ENCODE measurements at regions of chr4 and their contacts with region 1.

Region 1: GRCh38 chr4:56937262-56937661 is 29.6 kb downstream of the REST start:
- DNase-seq: peak; percentile 93
- ATAC-seq: peak; percentile 94
- H3K4me3 ChIP-seq: no peak overlapping the region
- H3K27ac ChIP-seq: peak overlapping the region; percentile 28
- H3K4me1 ChIP-seq: peaks cover 2% of the 10 kb centered on the region; the same call in 1 of the 2 replicates
- H3K27me3 ChIP-seq: no peaks in the 10 kb centered on the region
- CTCF ChIP-seq: no peak
- POLR2A ChIP-seq: no peak
- RAD21 ChIP-seq: no peak

Region 2: GRCh38 chr4:55931833-55932232 is 1005.4 kb before region 1 on chr4:
- CTCF ChIA-PET with region 1: no interaction called
- POLR2A ChIA-PET with region 1: no interaction called
- dilution Hi-C with region 1: no loop called
- in situ Hi-C with region 1: no loop called
- intact Hi-C with region 1: no loop called
- DNase-seq: peak; percentile 80
- ATAC-seq: peak; percentile 86
- H3K4me3 ChIP-seq: no peak overlapping the region
- H3K27ac ChIP-seq: peak overlapping the region; percentile 78
- H3K4me1 ChIP-seq: peaks cover 8% of the 10 kb centered on the region
- H3K27me3 ChIP-seq: no peaks in the 10 kb centered on the region
- CTCF ChIP-seq: no peak
- POLR2A ChIP-seq: no peak
- RAD21 ChIP-seq: no peak

Region 3: GRCh38 chr4:56977321-56978012 is 40.2 kb after region 1 on chr4 and contains the start of gene NOA1:
- CTCF ChIA-PET with region 1: interaction called, 5 read pairs
- POLR2A ChIA-PET with region 1: no interaction called
- dilution Hi-C with region 1: no loop called
- in situ Hi-C with region 1: no loop called
- intact Hi-C with region 1: loop called (anchors 2 kb)
- DNase-seq: peak; percentile 99
- ATAC-seq: peak; percentile 71
- H3K4me3 ChIP-seq: peak within 1 kb of the TSS; percentile 86
- H3K27ac ChIP-seq: peak within 1 kb of the TSS; percentile 89
- H3K4me1 ChIP-seq: no peaks in the 10 kb centered on the region
- H3K27me3 ChIP-seq: no peaks in the 10 kb centered on the region
- CTCF ChIP-seq: no peak
- POLR2A ChIP-seq: peak; percentile 59; the same call in 1 of the 2 replicates
- RAD21 ChIP-seq: no peak
- total RNA-seq, gene NOA1: 9.7 and 10.4 TPM in 2 replicates

Region 4: DNA sequence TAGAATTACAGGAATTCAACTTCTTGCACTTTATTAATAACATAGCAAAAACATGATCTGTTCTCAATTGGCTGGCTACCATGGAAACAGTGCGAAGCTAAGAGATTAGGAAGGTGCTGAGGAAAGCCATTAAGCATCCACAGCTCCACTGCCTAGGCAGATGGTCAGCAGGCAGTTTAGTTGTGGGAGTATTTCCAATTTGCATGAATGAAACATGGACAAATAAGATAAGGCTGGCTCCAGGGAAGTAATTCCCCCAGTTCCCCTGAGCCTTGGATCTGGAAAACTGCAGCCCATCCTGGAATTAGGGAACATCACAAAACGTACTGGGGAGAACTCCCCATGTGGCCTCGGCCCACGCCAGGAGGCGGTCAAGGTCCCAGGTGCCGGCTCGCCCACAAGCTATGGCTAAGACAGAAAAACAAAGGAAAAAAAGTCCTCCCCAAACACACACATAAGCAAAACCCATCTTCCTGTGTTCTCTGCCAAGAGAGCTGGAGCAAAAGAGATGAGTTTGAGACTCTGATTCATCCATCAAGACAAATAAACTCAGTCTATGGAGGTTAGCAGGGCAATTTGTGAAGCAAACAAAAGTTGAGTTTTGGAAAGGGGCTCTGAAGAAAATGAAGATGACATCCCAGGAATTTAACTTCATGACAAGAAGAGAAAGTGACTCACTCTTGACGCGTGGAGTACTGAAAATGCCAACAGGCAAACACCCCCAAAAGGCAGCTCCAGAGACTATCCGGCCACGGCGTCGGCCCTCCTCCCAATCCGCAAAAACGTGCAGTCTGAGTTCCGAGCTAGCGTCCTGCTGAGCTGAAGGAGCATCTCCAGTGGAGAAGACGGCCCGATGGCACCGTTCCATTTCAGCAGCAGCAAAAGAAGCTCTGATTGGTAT is 127.8 kb after region 1 on chr4:
- CTCF ChIA-PET with region 1: no interaction called
- POLR2A ChIA-PET with region 1: no interaction called
- dilution Hi-C with region 1: no loop called
- in situ Hi-C with region 1: no loop called
- intact Hi-C with region 1: no loop called
- DNase-seq: peak; percentile 98
- ATAC-seq: peak; percentile 76
- H3K4me3 ChIP-seq: peak overlapping the region; percentile 8; the same call in 1 of the 2 replicates
- H3K27ac ChIP-seq: peak overlapping the region; percentile 65
- H3K4me1 ChIP-seq: peaks cover 30% of the 10 kb centered on the region
- H3K27me3 ChIP-seq: no peaks in the 10 kb centered on the region
- CTCF ChIP-seq: no peak
- POLR2A ChIP-seq: no peak; the same call in 1 of the 2 replicates
- RAD21 ChIP-seq: peak; percentile 1; the same call in 1 of the 2 replicates

Measured in IMR-90 (cell line).